Heart left ventricle (tissue), 16 donors: ENCODE measurements at regions of chr3 and their contacts with region 1.

Region 1: GRCh38 chr3:184250167-184250828 is 826 bp downstream of the EEF1AKMT4 start:
- DNase-seq: peak; percentile 73 to 88 (median 85)
- ATAC-seq: peak; percentile 70 to 84 (median 82)
- H3K4me3 ChIP-seq: peak overlapping the region; percentile 47 to 99 (median 82)
- H3K27ac ChIP-seq: peak overlapping the region in 11 of 12 donors; percentile 25 to 96 (median 76)
- H3K4me1 ChIP-seq: peaks cover 0 to 22% (median 11%) of the 10 kb centered on the region in 12 donors
- H3K27me3 ChIP-seq: no peaks in the 10 kb centered on the region
- CTCF ChIP-seq: peak; percentile 82 to 98 (median 94)
- POLR2A ChIP-seq: no peak

Region 2: GRCh38 chr3:183680061-183680460 is 570.2 kb before region 1 on chr3:
- intact Hi-C with region 1: no loop called
- DNase-seq: no peak
- ATAC-seq: peak in 1 of 4 donors; percentile 34
- H3K4me3 ChIP-seq: no peak overlapping the region
- H3K27ac ChIP-seq: no peak overlapping the region
- H3K4me1 ChIP-seq: peaks cover 0 to 4% (median 0%) of the 10 kb centered on the region in 12 donors
- H3K27me3 ChIP-seq: no peaks in the 10 kb centered on the region
- CTCF ChIP-seq: no peak
- POLR2A ChIP-seq: no peak

Region 3: GRCh38 chr3:183895296-183895695 is 355.0 kb before region 1 on chr3:
- intact Hi-C with region 1: loop called in 8 of 10 experiments (anchors 5 to 10 kb)
- DNase-seq: no peak
- ATAC-seq: peak in 3 of 4 donors; percentile 62 to 68 (median 64)
- H3K4me3 ChIP-seq: no peak overlapping the region
- H3K27ac ChIP-seq: no peak overlapping the region
- H3K4me1 ChIP-seq: no peaks in the 10 kb centered on the region
- H3K27me3 ChIP-seq: peaks cover 0 to 6% (median 0%) of the 10 kb centered on the region in 9 donors
- CTCF ChIP-seq: peak; percentile 64 to 83 (median 78)
- POLR2A ChIP-seq: no peak

Region 4: GRCh38 chr3:184135149-184135910 is 115.0 kb before region 1 on chr3 and contains the start of gene EIF2B5:
- intact Hi-C with region 1: loop called in 5 of 10 experiments (anchors 2 to 10 kb)
- DNase-seq: peak; percentile 93 to 96 (median 95)
- ATAC-seq: peak; percentile 95 to 97 (median 96)
- H3K4me3 ChIP-seq: peak within 1 kb of the TSS; percentile 71 to 99 (median 90)
- H3K27ac ChIP-seq: peak within 1 kb of the TSS; percentile 76 to 95 (median 91)
- H3K4me1 ChIP-seq: peaks cover 0 to 28% (median 18%) of the 10 kb centered on the region in 12 donors
- H3K27me3 ChIP-seq: no peaks in the 10 kb centered on the region
- CTCF ChIP-seq: peak; percentile 14 to 77 (median 44)
- POLR2A ChIP-seq: peak in 1 of 2 donors; percentile 58
- total RNA-seq, gene EIF2B5: 24.5 to 39.0 (median 30.9) TPM

Region 5: DNA sequence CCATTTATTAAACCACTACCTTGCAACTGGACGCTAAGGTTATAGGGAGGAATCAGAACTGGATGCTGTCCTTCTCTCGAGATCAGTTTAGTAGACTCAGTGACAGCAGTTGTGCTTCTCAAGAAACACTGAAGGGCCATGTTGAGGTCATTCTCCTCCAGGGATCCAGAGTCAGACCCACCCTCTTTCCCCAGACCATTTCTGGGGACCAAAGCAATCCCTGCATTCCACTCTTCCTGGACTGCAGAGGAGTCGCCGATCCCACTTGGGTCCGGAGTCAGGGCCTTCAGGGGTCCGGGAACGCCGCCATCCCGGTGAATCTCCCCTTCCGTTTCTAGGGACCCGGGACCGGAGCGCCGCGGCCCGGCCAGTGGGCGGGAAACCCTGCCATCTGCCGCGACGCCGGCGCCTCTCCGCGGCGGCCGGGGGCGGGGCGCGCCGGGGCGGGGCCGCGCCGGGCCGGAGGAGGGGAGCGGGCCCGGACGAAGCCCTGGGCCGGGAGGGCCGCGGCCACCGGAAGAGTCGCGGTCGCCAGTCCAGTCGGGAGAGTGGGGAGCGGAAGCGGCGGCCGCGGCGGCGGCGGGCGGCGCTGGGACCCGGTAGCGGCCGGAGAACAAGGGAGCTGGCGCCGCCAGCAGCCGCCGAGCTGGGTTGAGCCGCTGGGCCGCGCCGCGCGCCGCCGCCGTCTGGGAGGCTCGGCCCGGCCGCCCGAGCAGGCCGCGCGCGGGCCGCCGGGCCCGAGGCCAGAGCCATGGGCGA is 95.2 kb before region 1 on chr3 and contains the start of gene DVL3:
- intact Hi-C with region 1: loop called in 2 of 10 experiments (anchors 5 to 10 kb)
- DNase-seq: peak; percentile 73 to 87 (median 82)
- ATAC-seq: peak; percentile 53 to 92 (median 82)
- H3K4me3 ChIP-seq: peak within 1 kb of the TSS; percentile 63 to 99 (median 90)
- H3K27ac ChIP-seq: peak within 1 kb of the TSS; percentile 73 to 98 (median 94)
- H3K4me1 ChIP-seq: peaks cover 2 to 55% (median 37%) of the 10 kb centered on the region in 12 donors
- H3K27me3 ChIP-seq: no peaks in the 10 kb centered on the region
- CTCF ChIP-seq: no peak
- POLR2A ChIP-seq: peak in 1 of 2 donors; percentile 49
- total RNA-seq, gene DVL3: 53.4 to 94.2 (median 70.9) TPM

Region 6: DNA sequence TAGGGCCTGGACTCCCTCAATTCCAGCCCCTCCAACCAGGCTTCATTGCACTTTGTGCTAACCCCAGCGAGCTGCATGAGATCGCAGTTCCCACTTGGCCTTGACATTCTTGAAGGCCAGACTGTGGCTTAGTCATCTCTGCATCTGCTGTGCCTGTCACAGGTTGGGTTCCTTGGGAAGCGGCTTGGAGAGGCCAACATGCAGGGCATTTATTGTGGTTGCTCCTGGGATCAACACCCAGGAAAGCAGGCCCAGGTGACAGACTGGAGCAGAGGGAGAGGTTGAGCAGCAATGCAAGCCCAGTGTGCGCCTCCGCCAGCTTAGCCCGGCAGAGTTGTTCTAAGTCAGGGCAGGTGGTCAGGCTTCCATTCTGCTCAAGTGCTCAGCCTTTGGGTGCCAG is 53.8 kb before region 1 on chr3:
- intact Hi-C with region 1: loop called in 1 of 10 experiments (anchors 10 kb)
- DNase-seq: no peak
- ATAC-seq: no peak
- H3K4me3 ChIP-seq: no peak overlapping the region
- H3K27ac ChIP-seq: no peak overlapping the region
- H3K4me1 ChIP-seq: no peaks in the 10 kb centered on the region
- H3K27me3 ChIP-seq: no peaks in the 10 kb centered on the region
- CTCF ChIP-seq: no peak
- POLR2A ChIP-seq: no peak

Region 7: DNA sequence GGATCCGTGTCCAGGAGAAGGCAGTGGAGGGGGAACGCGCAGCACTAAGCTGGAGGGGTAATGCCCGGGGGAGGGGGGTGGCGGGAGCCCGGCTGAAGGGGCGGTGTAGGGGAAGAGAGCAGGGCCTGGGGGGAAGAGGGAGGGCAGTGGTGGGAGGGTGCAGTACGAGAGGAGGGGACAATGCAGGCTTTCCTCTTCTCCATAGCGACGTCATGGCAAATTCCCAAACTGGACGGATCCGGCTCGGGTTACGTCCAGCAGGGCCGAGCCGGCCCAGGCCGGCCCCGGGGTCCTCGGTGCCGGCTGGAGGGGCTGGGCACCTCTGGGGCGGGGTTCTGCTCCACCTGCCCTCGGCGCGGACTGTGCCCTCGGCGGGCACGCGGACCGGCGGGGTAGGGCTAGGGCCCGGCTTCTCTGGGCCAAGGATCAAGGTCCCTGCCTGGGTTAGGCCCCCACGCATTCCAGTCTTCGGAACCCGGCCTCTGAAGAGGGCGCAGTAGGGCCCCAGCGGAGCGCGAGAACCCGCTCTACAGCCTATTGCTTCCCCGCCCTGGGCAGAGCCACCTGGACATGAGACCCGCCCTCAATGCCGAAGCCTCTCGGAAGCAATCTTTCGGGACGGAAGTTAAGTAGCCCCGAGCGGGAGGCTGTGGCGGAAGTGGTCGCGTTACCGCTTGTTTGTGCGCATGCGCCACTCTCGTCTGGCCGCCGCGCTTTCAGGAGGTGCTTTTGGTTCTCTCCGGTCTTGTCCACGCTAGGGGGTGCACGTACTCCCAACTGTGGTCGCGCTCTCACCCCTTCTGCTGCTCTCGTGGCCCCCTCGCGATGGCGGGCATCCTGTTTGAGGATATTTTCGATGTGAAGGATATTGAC is 112.6 kb after region 1 on chr3:
- intact Hi-C with region 1: no loop called
- DNase-seq: peak; percentile 95 to 97 (median 97)
- ATAC-seq: peak; percentile 77 to 85 (median 79)
- H3K4me3 ChIP-seq: peak overlapping the region; percentile 63 to 100 (median 91)
- H3K27ac ChIP-seq: peak overlapping the region; percentile 97 to 100 (median 100)
- H3K4me1 ChIP-seq: peaks cover 0 to 31% (median 22%) of the 10 kb centered on the region in 12 donors
- H3K27me3 ChIP-seq: no peaks in the 10 kb centered on the region
- CTCF ChIP-seq: peak in 11 of 12 donors; percentile 35 to 80 (median 63)
- POLR2A ChIP-seq: peak in 1 of 2 donors; percentile 83